PC-9 (cell line): ENCODE measurements at regions of chr3 and their contacts with region 1.

Region 1: DNA sequence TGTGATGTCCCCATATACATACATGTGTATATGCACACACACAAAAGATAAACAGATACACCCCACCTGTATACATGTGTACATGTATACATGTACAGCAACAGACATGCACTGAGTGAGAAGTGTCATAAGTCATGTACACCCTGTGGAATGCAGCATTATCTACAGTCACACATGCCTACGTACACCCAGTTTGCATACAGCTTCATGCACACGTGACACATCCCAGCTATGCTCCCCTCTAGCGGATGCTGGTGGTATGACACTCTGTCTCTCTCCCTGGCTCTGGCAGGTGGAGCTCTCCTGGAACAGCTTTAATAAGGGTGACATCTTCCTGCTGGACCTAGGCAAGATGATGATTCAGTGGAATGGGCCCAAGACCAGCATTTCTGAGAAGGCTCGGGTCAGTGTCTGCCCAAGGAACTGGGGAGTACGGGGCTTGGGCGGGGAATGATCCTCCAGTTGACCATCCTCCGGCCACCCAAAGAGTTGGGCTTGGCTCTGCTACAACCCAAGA is 6.3 kb downstream of the VILL start:
- DNase-seq: peak; percentile 70 to 72
- H3K4me3 ChIP-seq: no peak overlapping the region
- H3K27ac ChIP-seq: no peak overlapping the region
- H3K4me1 ChIP-seq: peaks cover 30% of the 10 kb centered on the region
- H3K27me3 ChIP-seq: no peaks in the 10 kb centered on the region
- CTCF ChIP-seq: peak; percentile 92

Region 2: DNA sequence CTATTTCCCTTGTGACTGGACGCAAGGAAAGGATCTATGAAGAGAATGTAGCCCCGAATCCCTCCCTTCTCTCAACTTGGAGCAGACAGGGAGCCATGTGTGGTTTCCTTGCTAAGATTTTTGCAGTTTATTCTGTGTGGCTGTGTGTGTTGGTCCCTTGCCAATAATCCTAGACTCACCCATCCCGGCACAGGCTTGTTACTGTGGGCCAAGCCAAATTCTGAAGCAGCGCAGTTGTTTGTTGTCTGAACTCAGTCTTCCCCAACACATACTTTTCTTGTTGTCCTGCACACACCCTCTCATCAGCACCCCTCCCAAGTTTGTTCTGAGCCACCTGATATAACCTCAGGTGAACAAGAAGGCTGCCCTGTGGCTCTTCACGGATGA is 328.4 kb before region 1 on chr3:
- CTCF ChIA-PET with region 1: interaction called, 19 read pairs
- POLR2A ChIA-PET with region 1: no interaction called
- intact Hi-C with region 1: no loop called
- DNase-seq: no peak
- H3K4me3 ChIP-seq: no peak overlapping the region
- H3K27ac ChIP-seq: no peak overlapping the region
- H3K4me1 ChIP-seq: no peaks in the 10 kb centered on the region
- H3K27me3 ChIP-seq: peaks cover 57% of the 10 kb centered on the region
- CTCF ChIP-seq: no peak

Region 3: GRCh38 chr3:37855363-37855970 is 141.4 kb before region 1 on chr3:
- CTCF ChIA-PET with region 1: interaction called, 11 read pairs
- POLR2A ChIA-PET with region 1: interaction called, 3 read pairs
- intact Hi-C with region 1: loop called (anchors 1 kb)
- DNase-seq: peak; percentile 61 to 76
- H3K4me3 ChIP-seq: no peak overlapping the region
- H3K27ac ChIP-seq: no peak overlapping the region
- H3K4me1 ChIP-seq: peaks cover 16% of the 10 kb centered on the region
- H3K27me3 ChIP-seq: no peaks in the 10 kb centered on the region
- CTCF ChIP-seq: peak; percentile 91

Region 4: DNA sequence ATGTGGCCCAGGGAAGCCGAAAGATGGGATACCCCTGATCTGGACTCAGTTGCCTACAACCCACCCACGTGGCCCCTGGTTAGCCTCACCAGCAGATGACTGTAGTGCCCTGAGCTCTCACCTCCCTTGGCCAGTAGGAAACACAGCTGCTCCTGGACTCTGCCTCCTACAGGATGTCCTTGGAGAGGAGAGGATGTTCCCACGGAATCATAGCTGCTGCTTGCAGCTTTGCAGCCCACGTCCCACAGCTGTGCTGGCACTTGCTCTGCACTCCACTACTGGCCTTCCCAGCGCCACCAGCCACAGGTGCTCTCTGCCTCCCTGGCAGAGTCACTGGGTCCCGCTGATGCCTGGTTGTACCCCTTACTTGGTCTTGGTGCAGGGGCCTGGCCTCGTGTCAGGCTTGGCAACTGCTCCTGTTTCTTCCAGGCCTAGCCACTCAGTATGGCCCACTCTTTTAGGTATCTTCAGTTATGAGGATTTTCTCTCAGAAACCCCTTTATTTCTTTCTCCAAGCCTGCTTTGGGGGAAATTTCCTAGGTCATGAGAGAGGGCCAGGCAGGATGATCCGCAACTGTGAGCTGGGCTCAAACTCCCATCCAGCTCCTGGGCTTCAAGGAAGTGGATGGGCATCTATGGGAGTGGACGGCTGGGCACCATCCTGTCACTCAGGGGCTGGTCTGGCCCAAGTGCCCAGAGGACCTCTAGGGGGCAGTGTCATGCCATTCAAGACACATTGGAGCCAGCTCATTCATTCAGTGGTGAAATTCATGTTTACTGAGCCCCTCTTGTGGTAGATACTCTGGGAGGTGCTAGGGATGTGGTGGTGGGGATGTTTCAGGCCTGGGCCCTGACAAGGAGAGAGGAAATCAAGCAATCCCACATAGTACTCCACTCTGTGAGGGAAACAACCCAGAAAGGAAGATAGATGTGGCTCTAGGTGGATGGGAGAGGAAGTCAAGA is 22.4 kb before region 1 on chr3:
- CTCF ChIA-PET with region 1: interaction called, 18 read pairs
- POLR2A ChIA-PET with region 1: interaction called, 3 read pairs
- intact Hi-C with region 1: loop called (anchors 2 kb)
- DNase-seq: peak; percentile 47 to 62
- H3K4me3 ChIP-seq: no peak overlapping the region
- H3K27ac ChIP-seq: no peak overlapping the region
- H3K4me1 ChIP-seq: no peaks in the 10 kb centered on the region
- H3K27me3 ChIP-seq: no peaks in the 10 kb centered on the region
- CTCF ChIP-seq: peak; percentile 85